CD4-positive, alpha-beta memory T cell (primary cell): ENCODE measurements at regions of chr1 and their contacts with region 1.

Region 1: GRCh38 chr1:244864253-244865027 is at the start of gene HNRNPU:
- DNase-seq: peak; percentile 94 to 98 (median 98)
- H3K4me3 ChIP-seq: peak within 1 kb of the TSS; percentile 64 to 77
- H3K4me3 Mint-ChIP-seq: peak within 1 kb of the TSS; percentile 86 to 97 (median 96)
- H3K27ac ChIP-seq: peak within 1 kb of the TSS; percentile 99
- H3K27ac Mint-ChIP-seq: peak within 1 kb of the TSS; percentile 97 to 100 (median 99)
- H3K4me1 ChIP-seq: peaks cover 39% of the 10 kb centered on the region
- H3K4me1 Mint-ChIP-seq: peaks cover 29 to 70% (median 40%) of the 10 kb centered on the region in 4 donors
- H3K27me3 ChIP-seq: no peaks in the 10 kb centered on the region
- H3K27me3 Mint-ChIP-seq: peaks cover 0 to 1% of the 10 kb centered on the region in 2 donors
- total RNA-seq, gene HNRNPU: 370 to 385 TPM

Region 2: DNA sequence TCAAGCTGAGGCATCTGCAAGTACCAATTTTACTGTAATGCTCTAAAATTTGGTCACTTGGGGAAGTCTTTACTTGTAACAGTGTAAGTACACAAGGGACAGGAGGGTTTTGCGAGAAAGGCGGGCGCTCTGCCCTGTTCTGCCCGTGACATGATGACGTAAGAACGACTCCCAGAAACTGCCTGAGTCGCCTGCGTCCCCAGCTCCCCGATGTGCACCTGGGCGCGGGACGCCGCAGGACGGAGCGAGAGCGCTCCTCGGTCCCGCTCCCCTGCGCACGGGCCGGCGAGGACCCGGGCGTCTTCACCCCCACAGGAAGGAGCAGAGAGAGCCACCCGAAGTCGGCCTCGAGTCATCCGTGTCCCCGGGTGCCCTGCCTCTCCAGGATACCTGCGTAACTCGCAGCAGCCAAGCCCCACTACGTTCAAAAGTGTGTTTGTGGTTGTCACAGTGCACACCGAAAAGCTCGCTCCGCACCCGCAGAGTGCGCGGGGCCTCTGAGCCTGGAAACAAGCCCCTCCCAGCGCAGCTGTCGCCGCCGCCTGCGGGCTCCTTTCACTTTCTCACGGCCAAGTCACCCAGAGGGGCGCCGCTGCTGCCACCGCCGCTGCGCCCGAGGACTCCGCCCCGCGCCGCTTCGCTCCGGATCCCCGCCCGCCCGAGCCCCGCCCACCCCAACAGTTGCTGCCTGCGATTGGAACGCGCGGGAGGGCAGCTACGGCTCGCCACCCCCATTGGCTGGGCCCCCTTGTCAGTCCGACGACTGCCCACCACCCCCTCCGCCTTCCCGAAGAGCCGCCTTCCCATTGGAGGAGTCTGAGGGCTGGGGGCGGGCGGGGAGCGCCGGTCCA is 816.6 kb before region 1 on chr1:
- CTCF ChIA-PET with region 1: no interaction called
- POLR2A ChIA-PET with region 1: interaction called, 8 read pairs
- intact Hi-C with region 1: loop called (anchors 10 kb)
- DNase-seq: peak; percentile 93 to 99 (median 97)
- H3K4me3 ChIP-seq: peak overlapping the region; percentile 77 to 99
- H3K4me3 Mint-ChIP-seq: peak overlapping the region; percentile 84 to 98 (median 95)
- H3K27ac ChIP-seq: peak overlapping the region; percentile 94
- H3K27ac Mint-ChIP-seq: peak overlapping the region; percentile 91 to 100 (median 98)
- H3K4me1 ChIP-seq: peaks cover 47% of the 10 kb centered on the region
- H3K4me1 Mint-ChIP-seq: peaks cover 21 to 28% (median 27%) of the 10 kb centered on the region in 4 donors
- H3K27me3 ChIP-seq: no peaks in the 10 kb centered on the region
- H3K27me3 Mint-ChIP-seq: peaks cover 0 to 2% of the 10 kb centered on the region in 2 donors

Region 3: DNA sequence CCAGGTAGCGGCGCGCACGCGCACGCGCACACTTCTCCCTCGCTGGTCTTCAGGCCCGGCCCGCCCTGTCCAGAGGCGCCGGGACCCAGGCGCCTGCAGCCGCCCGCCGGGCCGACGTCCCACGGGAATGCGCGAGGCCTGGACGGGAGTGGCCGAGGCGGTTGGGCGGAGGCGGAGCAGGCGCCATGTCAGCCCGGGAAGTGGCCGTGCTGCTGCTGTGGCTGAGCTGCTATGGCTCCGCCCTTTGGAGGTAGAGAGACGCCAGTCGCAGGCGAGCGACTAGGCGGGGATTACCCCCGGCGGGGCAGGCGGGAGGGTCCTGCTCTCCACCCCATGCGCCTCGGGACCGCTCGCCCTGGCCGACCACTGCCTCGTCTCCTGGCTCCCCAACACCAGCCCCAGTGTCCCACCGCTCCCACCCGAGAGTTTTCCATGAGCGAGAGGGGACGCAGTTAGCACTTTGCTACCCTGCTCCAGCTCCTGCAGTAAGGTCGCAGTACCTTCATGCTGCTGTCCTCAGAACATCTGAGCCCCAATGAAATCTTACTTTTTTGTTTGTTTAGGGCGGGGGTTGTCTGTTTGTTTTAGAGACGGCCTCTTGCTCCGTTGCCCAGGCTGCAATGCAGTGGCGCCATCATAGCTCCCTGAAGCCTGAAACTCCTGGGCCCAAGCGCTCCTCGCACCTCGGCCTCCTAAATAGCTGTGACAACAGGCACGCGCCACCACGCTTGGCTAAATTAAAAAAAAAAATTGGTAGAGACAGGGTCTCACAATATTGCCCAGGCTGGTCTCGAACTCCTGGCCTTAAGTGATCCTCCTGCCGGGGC is 403.0 kb before region 1 on chr1 and contains the start of gene CATSPERE:
- CTCF ChIA-PET with region 1: no interaction called
- POLR2A ChIA-PET with region 1: interaction called, 13 read pairs
- intact Hi-C with region 1: no loop called
- DNase-seq: peak; percentile 72 to 80 (median 77)
- H3K4me3 ChIP-seq: peak within 1 kb of the TSS; percentile 70 to 89
- H3K4me3 Mint-ChIP-seq: peak within 1 kb of the TSS; percentile 78 to 90 (median 84)
- H3K27ac ChIP-seq: peak within 1 kb of the TSS; percentile 70
- H3K27ac Mint-ChIP-seq: peak within 1 kb of the TSS; percentile 62 to 98 (median 88)
- H3K4me1 ChIP-seq: peaks cover 9% of the 10 kb centered on the region
- H3K4me1 Mint-ChIP-seq: peaks cover 7 to 14% (median 11%) of the 10 kb centered on the region in 4 donors
- H3K27me3 ChIP-seq: no peaks in the 10 kb centered on the region
- H3K27me3 Mint-ChIP-seq: no peaks in the 10 kb centered on the region
- total RNA-seq, gene CATSPERE: 1.4 to 2.3 TPM

Region 4: DNA sequence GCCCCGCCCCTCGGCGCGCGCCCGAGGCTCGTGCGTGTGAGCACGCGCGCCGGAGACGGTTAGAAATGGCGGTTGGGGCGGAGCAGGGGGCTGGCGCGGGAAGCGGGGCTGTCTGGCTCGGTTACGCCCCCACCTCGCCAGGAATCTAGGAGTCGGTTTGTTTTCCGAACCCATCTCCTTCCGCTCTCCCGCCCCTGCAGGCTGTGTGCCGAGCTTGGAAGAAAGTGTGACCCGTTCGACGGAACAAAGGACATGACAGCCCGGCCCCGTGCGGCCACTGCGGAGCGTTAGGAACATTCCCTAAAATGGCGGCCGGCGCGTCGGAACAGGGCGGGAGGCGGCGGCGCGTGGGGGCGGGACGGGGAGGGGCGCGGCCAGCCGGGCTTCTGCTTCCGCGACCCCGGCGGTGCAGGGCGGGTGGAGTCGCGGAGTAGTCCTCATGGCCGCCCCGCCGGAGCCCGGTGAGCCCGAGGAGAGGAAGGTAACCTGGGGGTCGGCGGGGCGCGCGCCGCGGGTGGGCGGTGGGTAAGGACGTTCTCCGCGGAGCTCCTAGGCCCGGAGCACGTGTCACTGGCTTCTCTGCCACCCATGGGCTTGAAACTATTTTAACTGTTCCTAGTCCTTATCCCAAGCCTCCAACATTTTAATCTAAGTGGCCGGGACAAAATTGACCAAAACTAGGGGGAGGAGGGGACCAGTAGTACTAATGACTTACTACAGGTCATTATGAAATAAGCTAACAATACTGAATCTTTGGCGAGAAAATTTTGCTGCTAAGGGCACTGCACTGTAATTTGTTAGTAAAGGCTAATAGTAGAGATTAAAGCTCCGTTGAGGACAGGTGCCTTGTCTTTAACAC is 28.9 kb before region 1 on chr1 and contains the start of gene COX20:
- CTCF ChIA-PET with region 1: interaction called, 97 read pairs
- POLR2A ChIA-PET with region 1: interaction called, 1,465 read pairs
- intact Hi-C with region 1: loop called (anchors 1 kb)
- DNase-seq: peak; percentile 89 to 96 (median 94)
- H3K4me3 ChIP-seq: peak within 1 kb of the TSS; percentile 74 to 87
- H3K4me3 Mint-ChIP-seq: peak within 1 kb of the TSS; percentile 89 to 98 (median 96)
- H3K27ac ChIP-seq: peak within 1 kb of the TSS; percentile 94
- H3K27ac Mint-ChIP-seq: peak within 1 kb of the TSS; percentile 93 to 100 (median 99)
- H3K4me1 ChIP-seq: peaks cover 52% of the 10 kb centered on the region
- H3K4me1 Mint-ChIP-seq: peaks cover 35 to 67% (median 42%) of the 10 kb centered on the region in 4 donors
- H3K27me3 ChIP-seq: no peaks in the 10 kb centered on the region
- H3K27me3 Mint-ChIP-seq: no peaks in the 10 kb centered on the region
- total RNA-seq, gene COX20: 31.3 to 32.9 TPM

Region 5: DNA sequence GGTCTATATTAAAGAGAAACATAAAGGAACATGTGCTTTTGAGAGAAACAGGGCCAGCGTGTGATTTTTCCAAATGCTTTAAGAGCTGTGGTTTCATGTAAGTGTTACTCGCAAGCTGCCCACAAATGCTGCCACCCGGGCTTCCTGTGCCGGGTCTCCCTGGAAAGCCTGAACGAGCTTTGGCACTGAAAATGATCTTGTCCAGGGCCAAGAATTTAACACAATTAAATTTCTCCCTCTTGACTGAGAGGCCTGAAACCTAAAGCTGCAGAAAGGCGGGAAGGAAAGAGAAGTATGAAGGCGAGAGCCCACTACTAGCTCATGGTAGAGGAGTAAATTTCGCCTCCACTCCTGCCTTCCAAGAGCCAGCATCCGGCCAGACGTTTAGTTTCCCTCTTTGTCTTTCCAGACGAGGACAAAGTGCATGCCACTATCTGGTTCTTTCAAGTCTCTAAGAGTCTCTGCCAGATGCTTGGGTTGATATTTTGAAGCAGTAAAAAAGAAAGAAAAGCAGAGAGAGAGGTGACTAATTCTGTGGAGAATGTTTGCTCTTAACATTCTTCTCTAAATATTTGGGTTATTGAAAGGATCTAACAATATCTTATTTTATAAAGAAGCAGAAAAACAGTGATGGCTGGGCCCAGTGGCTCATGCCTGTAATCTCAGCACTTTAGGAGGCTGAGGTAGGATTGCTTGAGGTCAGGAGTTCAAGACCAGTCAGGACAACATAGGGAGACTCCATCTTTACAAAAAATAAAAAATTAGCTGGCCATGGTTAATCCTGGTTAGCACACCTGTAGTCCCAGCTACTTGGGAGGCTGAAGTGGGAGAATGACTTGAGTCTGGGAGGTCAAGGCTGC is 99.9 kb after region 1 on chr1:
- CTCF ChIA-PET with region 1: interaction called, 30 read pairs
- POLR2A ChIA-PET with region 1: interaction called, 356 read pairs
- intact Hi-C with region 1: no loop called
- DNase-seq: peak in 1 of 5 donors; percentile 12
- H3K4me3 ChIP-seq: no peak overlapping the region
- H3K4me3 Mint-ChIP-seq: peak overlapping the region in 5 of 8 donors; percentile 6 to 52 (median 28)
- H3K27ac ChIP-seq: no peak overlapping the region
- H3K27ac Mint-ChIP-seq: peak overlapping the region; percentile 49 to 83 (median 74)
- H3K4me1 ChIP-seq: peaks cover 25% of the 10 kb centered on the region
- H3K4me1 Mint-ChIP-seq: peaks cover 13 to 23% (median 21%) of the 10 kb centered on the region in 4 donors
- H3K27me3 ChIP-seq: no peaks in the 10 kb centered on the region
- H3K27me3 Mint-ChIP-seq: no peaks in the 10 kb centered on the region

Region 6: DNA sequence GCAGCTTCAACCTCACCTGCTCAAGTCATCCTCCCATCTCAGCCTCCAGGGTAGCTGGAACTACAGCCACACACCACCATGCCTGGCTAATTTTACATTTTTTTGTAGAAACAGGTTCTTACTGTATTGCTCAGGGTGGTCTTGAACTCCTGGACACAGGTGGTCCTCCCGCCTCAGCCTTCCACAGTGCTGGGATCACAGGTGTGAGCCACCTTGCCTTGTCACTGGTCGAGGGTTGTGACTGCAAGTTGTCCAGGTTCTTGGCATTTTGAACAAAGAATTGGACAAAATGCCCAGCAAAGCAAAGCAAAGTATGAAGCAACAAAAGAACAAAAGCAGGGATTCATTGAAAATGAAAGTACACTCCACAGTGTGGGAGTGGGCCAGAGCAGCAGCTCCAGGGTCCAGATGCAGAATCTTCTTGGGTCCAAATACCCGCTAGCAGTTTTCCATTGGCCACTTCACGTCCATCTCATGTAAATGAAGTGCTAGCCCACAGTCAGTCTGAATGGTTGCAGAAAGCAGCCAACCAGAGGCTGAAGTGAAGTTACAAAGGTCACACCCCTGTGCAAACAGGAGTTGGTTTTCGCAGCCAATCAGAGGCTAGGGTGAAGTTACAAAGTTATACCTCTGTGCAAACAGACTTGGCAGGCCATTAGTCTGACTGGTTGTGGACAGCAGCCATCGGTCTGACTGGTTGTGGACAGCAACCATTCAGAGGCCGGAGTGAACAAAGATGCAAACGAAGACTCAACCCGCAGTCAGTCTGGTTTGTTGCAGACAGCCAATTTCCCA is 180.8 kb after region 1 on chr1:
- CTCF ChIA-PET with region 1: interaction called, 40 read pairs
- POLR2A ChIA-PET with region 1: interaction called, 21 read pairs
- intact Hi-C with region 1: loop called (anchors 1 kb)
- DNase-seq: no peak
- H3K4me3 ChIP-seq: no peak overlapping the region
- H3K4me3 Mint-ChIP-seq: no peak overlapping the region
- H3K27ac ChIP-seq: no peak overlapping the region
- H3K27ac Mint-ChIP-seq: peak overlapping the region in 1 of 7 donors; percentile 31
- H3K4me1 ChIP-seq: no peaks in the 10 kb centered on the region
- H3K4me1 Mint-ChIP-seq: peaks cover 0 to 3% (median under 1%) of the 10 kb centered on the region in 4 donors
- H3K27me3 ChIP-seq: no peaks in the 10 kb centered on the region
- H3K27me3 Mint-ChIP-seq: peaks cover 0 to 1% of the 10 kb centered on the region in 2 donors